Spleen (tissue), 13 donors: ENCODE measurements at regions of chr1 and their contacts with region 1.

Region 1: GRCh38 chr1:89598450-89599331 is 34.2 kb upstream of the LRRC8C start:
- DNase-seq: no peak
- H3K4me3 ChIP-seq: no peak overlapping the region
- H3K27ac ChIP-seq: no peak overlapping the region
- H3K4me1 ChIP-seq: peaks cover 0 to 21% (median 0%) of the 10 kb centered on the region in 6 donors
- H3K27me3 ChIP-seq: no peaks in the 10 kb centered on the region
- CTCF ChIP-seq: peak; percentile 36 to 79 (median 71)
- POLR2A ChIP-seq: no peak

Region 2: DNA sequence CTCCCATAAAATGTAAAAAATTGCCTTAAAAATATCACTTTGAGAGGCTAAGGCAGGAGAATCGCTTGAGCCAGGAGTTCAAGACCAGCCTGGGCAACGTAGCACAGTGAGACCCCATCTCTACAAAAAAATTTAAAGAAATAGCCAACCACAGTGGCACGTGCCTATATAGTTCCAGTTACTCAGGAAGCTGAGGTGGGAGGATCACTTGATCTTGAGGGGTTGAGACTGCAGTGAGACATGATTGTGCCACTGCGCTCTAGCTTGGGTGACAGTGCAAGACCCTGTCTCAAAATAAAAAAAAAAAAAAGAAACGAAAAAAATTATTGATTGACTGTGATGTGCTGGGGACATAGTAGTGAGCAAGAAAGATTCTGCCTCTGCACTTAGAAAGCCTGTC is 876.2 kb before region 1 on chr1:
- intact Hi-C with region 1: no loop called
- DNase-seq: no peak
- H3K4me3 ChIP-seq: no peak overlapping the region
- H3K27ac ChIP-seq: no peak overlapping the region
- H3K4me1 ChIP-seq: peaks cover 0 to 24% (median 12%) of the 10 kb centered on the region in 6 donors
- H3K27me3 ChIP-seq: no peaks in the 10 kb centered on the region
- CTCF ChIP-seq: no peak
- POLR2A ChIP-seq: no peak

Region 3: GRCh38 chr1:89524369-89525168 is 74.1 kb before region 1 on chr1 and contains the start of gene LRRC8B:
- intact Hi-C with region 1: loop called (anchors 10 kb)
- DNase-seq: peak; percentile 99
- H3K4me3 ChIP-seq: peak within 1 kb of the TSS; percentile 84 to 99 (median 88)
- H3K27ac ChIP-seq: peak within 1 kb of the TSS; percentile 92 to 98 (median 95)
- H3K4me1 ChIP-seq: peaks cover 26 to 61% (median 38%) of the 10 kb centered on the region in 6 donors
- H3K27me3 ChIP-seq: no peaks in the 10 kb centered on the region
- CTCF ChIP-seq: peak in 1 of 11 experiments; percentile 4
- POLR2A ChIP-seq: peak in 1 of 3 donors; percentile 41
- total RNA-seq, gene LRRC8B: 11.6 to 22.5 (median 14.3) TPM

Region 4: GRCh38 chr1:89556726-89557444 is 41.8 kb before region 1 on chr1:
- intact Hi-C with region 1: no loop called
- DNase-seq: no peak
- H3K4me3 ChIP-seq: no peak overlapping the region
- H3K27ac ChIP-seq: peak overlapping the region in 2 of 8 donors; percentile 49 to 69
- H3K4me1 ChIP-seq: peaks cover 10 to 57% (median 17%) of the 10 kb centered on the region in 6 donors
- H3K27me3 ChIP-seq: no peaks in the 10 kb centered on the region
- CTCF ChIP-seq: no peak
- POLR2A ChIP-seq: no peak

Region 5: GRCh38 chr1:90187323-90187585 is 588.6 kb after region 1 on chr1:
- intact Hi-C with region 1: no loop called
- DNase-seq: no peak
- H3K4me3 ChIP-seq: no peak overlapping the region
- H3K27ac ChIP-seq: no peak overlapping the region
- H3K4me1 ChIP-seq: no peaks in the 10 kb centered on the region
- H3K27me3 ChIP-seq: peaks cover 0 to 5% (median 0%) of the 10 kb centered on the region in 7 donors
- CTCF ChIP-seq: no peak
- POLR2A ChIP-seq: no peak